Endothelial cell of umbilical vein (primary cell): ENCODE measurements at regions of chr4 and their contacts with region 1.

Region 1: GRCh38 chr4:140359562-140360427 is 13.7 kb upstream of the SCOC start:
- DNase-seq: peak; percentile 86
- H3K4me3 ChIP-seq: no peak overlapping the region
- H3K27ac ChIP-seq: no peak overlapping the region
- H3K4me1 ChIP-seq: peaks cover 6% of the 10 kb centered on the region
- H3K27me3 ChIP-seq: no peaks in the 10 kb centered on the region
- CTCF ChIP-seq: peak; percentile 77 to 89
- POLR2A ChIP-seq: no peak

Region 2: DNA sequence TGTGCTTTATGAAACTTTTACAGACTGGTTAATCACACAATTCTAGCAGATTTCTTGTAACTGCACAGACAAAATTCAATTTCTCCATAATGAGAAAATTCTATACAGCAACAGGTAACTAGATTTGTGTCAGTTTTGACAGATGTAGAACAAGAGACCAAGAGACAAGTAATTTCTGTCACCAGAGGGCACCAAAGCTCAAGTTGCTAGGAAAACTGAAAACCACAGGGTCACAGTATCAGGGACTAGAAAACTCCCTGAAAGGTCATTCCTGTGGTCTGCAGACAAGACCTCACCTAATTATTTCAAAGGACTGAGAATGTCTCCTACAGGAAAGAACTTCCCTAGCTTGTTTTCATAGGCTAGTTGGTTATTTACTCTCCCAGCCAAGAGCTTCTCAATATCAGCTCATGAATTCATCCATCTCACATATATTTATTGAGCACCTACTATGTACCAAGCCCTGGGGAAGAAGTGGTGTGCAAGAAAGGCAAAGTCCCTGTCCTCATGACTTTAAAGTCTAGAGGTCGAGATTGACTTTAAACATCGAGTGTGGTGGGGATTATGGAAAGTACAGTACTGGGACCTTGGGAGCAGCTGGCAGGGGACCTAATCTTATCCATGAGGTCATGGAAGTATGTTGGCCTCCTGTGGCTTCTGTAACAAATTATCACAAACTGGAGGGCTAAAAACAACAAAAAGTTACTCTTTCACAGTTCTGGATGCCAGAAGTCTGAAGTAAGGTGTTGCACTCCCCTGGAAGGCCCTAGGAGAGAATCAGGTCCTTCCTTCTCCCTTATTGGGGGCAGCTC is 756.0 kb before region 1 on chr4:
- CTCF ChIA-PET with region 1: interaction called, 15 read pairs
- POLR2A ChIA-PET with region 1: no interaction called
- dilution Hi-C with region 1: no loop called
- intact Hi-C with region 1: no loop called
- DNase-seq: peak; percentile 61
- H3K4me3 ChIP-seq: no peak overlapping the region
- H3K27ac ChIP-seq: no peak overlapping the region
- H3K4me1 ChIP-seq: peaks cover 3% of the 10 kb centered on the region
- H3K27me3 ChIP-seq: no peaks in the 10 kb centered on the region
- CTCF ChIP-seq: peak; percentile 38 to 55
- POLR2A ChIP-seq: no peak

Region 3: DNA sequence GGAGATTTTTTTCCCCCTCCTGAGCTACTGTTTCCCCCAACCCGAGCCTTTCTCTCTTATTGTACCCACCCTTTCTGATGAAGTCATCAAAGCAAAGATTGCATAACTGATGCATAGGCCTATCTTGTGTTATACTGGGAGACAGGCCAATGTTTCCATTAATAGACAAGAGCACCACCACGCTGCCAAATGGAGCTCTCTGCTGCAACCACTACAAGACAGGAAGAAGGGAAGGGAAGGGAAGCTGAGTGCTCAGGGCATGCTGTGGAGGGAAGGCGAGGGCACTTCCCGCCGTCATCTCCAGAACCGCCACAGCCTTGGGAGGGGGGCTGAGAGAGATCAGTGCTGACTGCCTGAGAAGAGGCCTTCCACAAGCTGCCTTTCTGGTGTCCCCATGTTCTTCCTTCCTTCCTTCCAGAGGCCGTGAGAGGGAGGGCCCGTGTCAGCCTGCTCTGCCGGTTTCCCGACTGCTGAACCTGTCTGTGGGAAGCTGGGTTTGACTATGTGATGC is 619.2 kb before region 1 on chr4:
- CTCF ChIA-PET with region 1: interaction called, 16 read pairs
- POLR2A ChIA-PET with region 1: no interaction called
- dilution Hi-C with region 1: no loop called
- intact Hi-C with region 1: no loop called
- DNase-seq: peak; percentile 92
- H3K4me3 ChIP-seq: no peak overlapping the region
- H3K27ac ChIP-seq: peak overlapping the region; percentile 42
- H3K4me1 ChIP-seq: peaks cover 15% of the 10 kb centered on the region
- H3K27me3 ChIP-seq: no peaks in the 10 kb centered on the region
- CTCF ChIP-seq: no peak
- POLR2A ChIP-seq: no peak

Region 4: DNA sequence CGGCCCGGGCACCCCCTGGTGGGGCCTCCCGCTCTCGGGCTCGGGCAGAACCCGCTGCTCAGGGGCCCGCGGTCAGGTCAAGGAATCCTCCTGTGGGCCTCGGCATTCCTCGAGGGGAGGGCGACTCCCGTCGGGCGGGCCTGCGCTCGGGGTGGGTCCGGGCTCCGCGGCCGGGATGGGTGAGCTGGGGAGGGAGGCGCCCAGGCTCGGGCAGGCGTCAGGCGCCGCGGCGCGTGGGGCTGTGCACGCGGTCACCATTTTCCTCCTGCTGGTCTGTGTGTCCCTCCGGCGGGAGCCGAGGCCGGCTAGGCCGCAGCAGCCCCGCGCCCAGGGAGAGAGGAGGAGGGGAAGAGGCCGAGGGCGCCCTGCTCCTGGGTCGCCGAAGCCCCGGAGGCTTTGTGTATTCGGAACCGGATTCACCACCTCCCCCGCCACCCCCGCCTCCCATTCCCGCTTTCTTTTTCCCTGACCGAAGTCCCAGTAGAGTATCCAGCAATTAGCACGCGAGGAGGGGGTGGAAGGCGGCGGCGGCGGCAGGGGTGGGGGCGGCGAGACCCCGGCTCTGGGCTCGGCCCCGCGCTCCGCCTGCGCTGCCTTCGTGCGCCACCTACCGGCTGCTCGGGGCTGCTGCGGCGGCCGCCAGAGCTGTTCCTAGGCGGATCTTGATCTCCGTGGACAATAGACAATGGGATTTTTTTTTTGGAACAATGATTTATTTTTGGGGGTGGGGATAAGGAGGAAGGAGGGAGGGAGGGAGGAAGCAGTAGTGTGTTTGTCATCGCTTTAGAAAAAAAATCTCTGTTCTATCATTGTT is 106.8 kb before region 1 on chr4:
- CTCF ChIA-PET with region 1: interaction called, 8 read pairs
- POLR2A ChIA-PET with region 1: no interaction called
- dilution Hi-C with region 1: no loop called
- intact Hi-C with region 1: loop called (anchors 1 kb)
- DNase-seq: peak; percentile 93
- H3K4me3 ChIP-seq: peak overlapping the region in 1 of 3 experiments; percentile 37
- H3K27ac ChIP-seq: peak overlapping the region; percentile 78
- H3K4me1 ChIP-seq: peaks cover 60% of the 10 kb centered on the region
- H3K27me3 ChIP-seq: no peaks in the 10 kb centered on the region
- CTCF ChIP-seq: peak; percentile 83 to 91
- POLR2A ChIP-seq: no peak

Region 5: DNA sequence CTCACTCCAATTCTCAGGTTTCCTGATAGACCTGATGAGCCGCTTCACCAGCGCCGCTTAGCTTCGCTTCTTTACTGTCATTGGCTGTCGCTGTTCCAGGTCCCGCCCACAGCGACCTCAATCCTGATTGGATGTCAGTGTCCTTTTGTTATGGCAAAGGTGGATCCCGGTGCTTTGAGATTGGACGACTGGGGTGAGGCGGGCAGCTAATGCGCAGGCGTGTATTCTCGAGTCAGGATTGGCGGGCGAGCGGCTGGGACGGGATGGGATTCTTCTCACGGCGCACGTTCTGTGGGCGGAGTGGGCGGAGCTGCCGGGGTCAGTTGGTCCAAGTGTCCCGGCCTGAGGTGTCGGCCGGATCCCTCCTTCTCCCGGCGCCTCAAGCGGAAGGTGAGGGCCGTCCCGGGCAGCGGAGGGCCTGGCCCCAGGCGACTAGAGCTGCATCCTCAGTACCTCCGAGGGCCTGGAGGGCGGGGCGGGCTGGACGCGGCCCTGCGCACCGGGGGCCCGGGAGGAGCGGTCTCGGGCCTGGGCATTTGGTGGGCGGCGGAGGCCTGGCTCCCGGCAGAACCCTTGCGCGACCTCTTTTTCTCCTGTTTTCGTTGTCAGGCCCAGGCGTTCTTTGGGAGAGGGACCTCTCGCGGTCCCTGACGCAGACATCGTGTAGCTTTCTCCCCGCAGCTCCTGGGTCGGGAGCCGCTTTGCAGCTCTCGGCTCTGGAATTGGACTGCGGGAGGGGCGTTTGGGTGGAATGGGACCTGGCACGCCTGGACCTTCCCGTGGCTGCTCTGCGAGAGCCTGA is 13.7 kb after region 1 on chr4 and contains the start of gene SCOC:
- CTCF ChIA-PET with region 1: interaction called, 60 read pairs
- POLR2A ChIA-PET with region 1: no interaction called
- dilution Hi-C with region 1: no loop called
- intact Hi-C with region 1: loop called (anchors 1 kb)
- DNase-seq: peak; percentile 100
- H3K4me3 ChIP-seq: peak within 1 kb of the TSS; percentile 76 to 92 (median 79)
- H3K27ac ChIP-seq: peak within 1 kb of the TSS; percentile 71
- H3K4me1 ChIP-seq: peaks cover 14% of the 10 kb centered on the region
- H3K27me3 ChIP-seq: no peaks in the 10 kb centered on the region
- CTCF ChIP-seq: no peak
- POLR2A ChIP-seq: peak; percentile 80
- total RNA-seq, gene SCOC: 38.3 and 38.5 TPM in 2 replicates

Region 6: GRCh38 chr4:140595065-140595464 is 235.3 kb after region 1 on chr4:
- CTCF ChIA-PET with region 1: interaction called, 11 read pairs
- POLR2A ChIA-PET with region 1: no interaction called
- dilution Hi-C with region 1: no loop called
- intact Hi-C with region 1: no loop called
- DNase-seq: peak; percentile 21
- H3K4me3 ChIP-seq: no peak overlapping the region
- H3K27ac ChIP-seq: no peak overlapping the region
- H3K4me1 ChIP-seq: no peaks in the 10 kb centered on the region
- H3K27me3 ChIP-seq: peaks cover 6 to 19% of the 10 kb centered on the region in 2 experiments
- CTCF ChIP-seq: peak; percentile 35 to 47
- POLR2A ChIP-seq: no peak

Region 7: DNA sequence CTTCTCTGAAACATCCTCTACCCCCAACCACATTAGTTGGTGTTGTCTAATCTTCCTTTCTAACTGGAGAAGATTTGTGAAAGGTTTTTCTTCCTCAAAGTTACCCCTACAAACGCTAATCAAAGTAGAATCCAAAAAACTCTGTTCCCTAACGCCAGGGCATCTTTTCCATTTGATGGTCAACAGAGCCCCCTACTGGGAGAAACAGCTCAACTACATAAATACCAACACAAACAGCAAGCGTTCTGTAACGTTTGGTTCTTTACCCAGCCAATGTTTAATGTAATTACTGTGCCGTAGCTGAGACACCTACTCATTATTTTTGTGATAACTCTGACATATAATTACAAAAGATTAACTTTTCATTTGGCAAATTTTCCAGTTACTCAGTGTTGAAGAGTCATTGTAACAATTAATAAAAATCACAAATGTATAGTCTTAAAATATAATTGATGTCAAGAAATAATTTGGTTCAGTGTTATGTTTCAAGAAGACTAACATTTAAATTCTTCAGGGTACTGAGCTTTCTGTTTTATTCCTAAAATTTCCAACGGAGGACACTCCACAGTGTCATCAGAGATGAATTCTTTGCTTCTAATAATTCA is 491.3 kb after region 1 on chr4:
- CTCF ChIA-PET with region 1: interaction called, 118 read pairs
- POLR2A ChIA-PET with region 1: no interaction called
- dilution Hi-C with region 1: no loop called
- intact Hi-C with region 1: loop called (anchors 1 kb)
- DNase-seq: peak; percentile 69
- H3K4me3 ChIP-seq: no peak overlapping the region
- H3K27ac ChIP-seq: no peak overlapping the region
- H3K4me1 ChIP-seq: no peaks in the 10 kb centered on the region
- H3K27me3 ChIP-seq: peaks cover 2 to 9% of the 10 kb centered on the region in 2 experiments
- CTCF ChIP-seq: peak; percentile 65 to 69
- POLR2A ChIP-seq: no peak